MCF 10A (cell line): ENCODE measurements at regions of chr17 and their contacts with region 1.

Region 1: DNA sequence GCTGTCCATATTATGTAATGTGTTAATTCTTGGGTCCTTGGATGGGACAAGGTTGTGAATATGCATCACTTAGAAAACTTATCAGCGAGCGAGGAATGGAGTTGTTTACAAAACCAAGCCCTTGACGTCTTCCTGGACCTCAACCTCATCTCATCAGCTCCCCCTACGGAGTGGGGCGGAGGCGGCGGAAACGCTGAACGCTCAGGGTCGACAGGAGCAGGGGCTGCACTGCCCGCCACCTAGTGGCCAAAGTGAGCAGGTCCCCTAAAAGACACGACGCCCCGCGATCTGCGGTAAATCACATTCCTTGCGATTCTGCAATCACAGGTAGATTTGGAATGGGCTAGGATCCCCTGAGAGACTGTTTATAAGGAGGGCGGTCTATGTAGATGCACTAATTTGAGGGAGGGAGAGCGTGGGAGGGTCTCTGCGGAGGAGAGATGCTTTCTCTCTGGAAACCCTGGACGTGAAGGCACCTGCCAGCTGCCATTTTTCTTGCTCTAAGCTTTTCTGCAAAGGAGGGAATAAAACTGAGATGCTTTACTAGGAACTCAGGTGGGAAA is 5.4 kb upstream of the ICAM2 start:
- DNase-seq: peak; percentile 69
- H3K4me3 Mint-ChIP-seq: peak overlapping the region; percentile 21
- H3K27ac Mint-ChIP-seq: no peak overlapping the region
- H3K4me1 Mint-ChIP-seq: peaks cover 7% of the 10 kb centered on the region
- H3K27me3 Mint-ChIP-seq: no peaks in the 10 kb centered on the region
- CTCF ChIP-seq: peak; percentile 84

Region 2: DNA sequence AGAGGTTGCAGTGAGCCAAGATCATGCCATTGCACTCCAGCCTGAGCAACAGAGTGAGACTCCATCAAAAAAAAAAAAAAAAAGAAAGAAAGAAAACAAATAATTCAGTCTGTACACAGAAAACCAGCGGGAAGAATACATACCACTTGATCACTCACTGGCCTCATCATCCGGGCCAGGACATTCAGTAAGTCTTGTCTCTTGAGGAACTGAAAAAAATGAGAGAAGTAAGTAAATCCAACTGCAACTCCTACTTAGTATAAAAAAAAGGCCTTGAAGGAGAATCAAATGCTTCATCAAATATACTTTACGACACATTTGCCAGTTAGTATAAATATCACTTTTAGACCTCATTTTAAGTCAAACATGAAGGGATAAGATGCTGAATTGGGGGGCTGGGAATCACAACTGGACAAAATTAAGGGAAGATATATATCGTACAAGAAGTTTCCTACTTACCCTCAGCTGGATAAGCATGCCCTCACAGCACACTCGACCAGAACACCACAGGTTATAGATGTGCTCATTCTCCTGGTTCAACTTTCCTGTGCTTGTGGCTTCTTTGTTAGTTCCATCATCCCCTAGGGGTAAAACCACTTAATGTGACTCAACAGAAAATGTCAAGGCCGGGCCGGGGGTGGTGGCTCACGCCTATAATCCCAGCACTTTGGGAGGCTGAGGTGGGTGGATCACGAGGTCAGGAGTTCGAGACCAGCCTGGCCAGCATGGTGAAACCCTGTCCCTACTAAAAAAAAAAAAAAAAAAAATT is 264.9 kb before region 1 on chr17:
- CTCF ChIA-PET with region 1: no interaction called
- POLR2A ChIA-PET with region 1: no interaction called
- intact Hi-C with region 1: no loop called
- DNase-seq: no peak
- H3K4me3 Mint-ChIP-seq: no peak overlapping the region
- H3K27ac Mint-ChIP-seq: no peak overlapping the region
- H3K4me1 Mint-ChIP-seq: peaks cover 4% of the 10 kb centered on the region
- H3K27me3 Mint-ChIP-seq: no peaks in the 10 kb centered on the region
- CTCF ChIP-seq: no peak

Region 3: DNA sequence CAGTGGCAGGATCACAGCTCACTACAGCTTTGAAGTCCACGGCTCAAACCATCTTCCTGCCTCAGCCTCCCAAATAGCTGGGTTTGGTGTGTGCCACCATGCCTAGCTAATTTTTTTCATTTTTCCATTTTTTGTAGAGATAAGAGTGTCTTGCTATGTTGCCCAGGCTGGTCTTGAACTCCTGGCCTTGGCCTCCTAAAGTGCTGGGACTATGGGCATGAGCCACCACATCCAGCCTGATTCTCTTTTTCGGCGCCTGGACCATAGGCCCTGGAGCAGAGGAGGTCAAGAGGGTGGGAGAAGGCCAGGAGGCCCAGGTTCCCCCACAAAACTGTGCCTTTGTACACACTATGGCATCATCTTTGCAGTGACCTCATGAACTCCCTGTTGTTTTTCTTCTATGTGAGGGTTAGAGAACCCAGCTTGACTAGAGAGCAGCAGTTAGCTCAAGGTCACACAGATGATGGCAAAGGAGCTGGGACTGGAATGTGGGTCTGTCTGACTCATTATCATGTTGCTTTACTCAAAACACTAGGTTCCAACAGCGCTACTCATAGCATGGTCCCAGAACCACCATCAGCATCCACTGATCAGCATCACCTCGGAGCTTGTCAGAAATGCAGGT is 69.4 kb before region 1 on chr17:
- CTCF ChIA-PET with region 1: no interaction called
- POLR2A ChIA-PET with region 1: no interaction called
- intact Hi-C with region 1: no loop called
- DNase-seq: no peak
- H3K4me3 Mint-ChIP-seq: no peak overlapping the region
- H3K27ac Mint-ChIP-seq: no peak overlapping the region
- H3K4me1 Mint-ChIP-seq: no peaks in the 10 kb centered on the region
- H3K27me3 Mint-ChIP-seq: no peaks in the 10 kb centered on the region
- CTCF ChIP-seq: no peak

Region 4: DNA sequence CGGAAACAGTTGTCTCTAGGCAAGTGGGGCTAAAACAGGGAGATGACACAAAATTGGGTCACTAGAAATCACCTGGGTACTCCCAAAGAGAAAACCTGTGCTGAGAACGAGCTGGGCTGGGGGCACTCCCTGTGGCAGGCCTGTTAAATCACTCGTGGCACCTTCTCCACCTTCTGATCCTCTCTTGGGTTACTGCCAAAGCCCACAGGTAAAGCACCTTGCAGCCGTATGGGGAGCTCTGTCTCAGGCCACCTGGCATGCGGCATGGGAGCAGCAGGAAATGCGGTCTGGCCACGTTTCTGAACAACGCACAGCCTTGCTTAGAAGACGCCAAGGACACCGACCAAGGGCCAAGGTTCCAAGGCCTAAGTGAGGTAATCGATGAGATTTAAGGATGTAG is 16.1 kb after region 1 on chr17:
- CTCF ChIA-PET with region 1: interaction called, 18 read pairs
- POLR2A ChIA-PET with region 1: interaction called, 3 read pairs
- intact Hi-C with region 1: no loop called
- DNase-seq: no peak
- H3K4me3 Mint-ChIP-seq: no peak overlapping the region
- H3K27ac Mint-ChIP-seq: no peak overlapping the region
- H3K4me1 Mint-ChIP-seq: no peaks in the 10 kb centered on the region
- H3K27me3 Mint-ChIP-seq: no peaks in the 10 kb centered on the region
- CTCF ChIP-seq: no peak

Region 5: DNA sequence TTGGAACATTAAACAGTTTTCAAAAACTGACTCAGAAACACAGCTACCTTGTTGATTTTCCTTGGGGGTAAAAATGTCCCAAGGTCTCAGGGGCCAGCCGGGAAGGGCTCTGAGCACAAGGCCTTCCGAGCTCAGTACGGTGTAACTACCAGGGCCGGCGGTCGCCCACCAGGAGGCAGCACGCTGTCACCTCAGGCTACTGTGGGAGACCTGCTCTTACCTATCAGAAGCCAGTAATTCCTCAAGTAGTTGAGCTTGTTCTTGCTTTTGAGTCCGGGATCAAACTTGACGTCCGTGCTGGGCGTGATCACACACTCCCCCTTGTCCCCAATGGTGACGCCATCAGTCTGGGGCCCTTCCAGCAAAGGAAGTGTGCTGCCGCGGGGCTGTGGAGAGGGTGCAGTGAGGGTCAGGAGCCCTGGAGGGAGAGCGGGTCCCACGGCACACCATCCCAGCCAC is 38.0 kb after region 1 on chr17:
- CTCF ChIA-PET with region 1: interaction called, 12 read pairs
- POLR2A ChIA-PET with region 1: interaction called, 3 read pairs
- intact Hi-C with region 1: no loop called
- DNase-seq: peak; percentile 46
- H3K4me3 Mint-ChIP-seq: no peak overlapping the region
- H3K27ac Mint-ChIP-seq: no peak overlapping the region
- H3K4me1 Mint-ChIP-seq: no peaks in the 10 kb centered on the region
- H3K27me3 Mint-ChIP-seq: no peaks in the 10 kb centered on the region
- CTCF ChIP-seq: peak; percentile 19

Region 6: GRCh38 chr17:64117981-64118979 is 92.5 kb after region 1 on chr17:
- CTCF ChIA-PET with region 1: interaction called, 18 read pairs
- POLR2A ChIA-PET with region 1: interaction called, 8 read pairs
- intact Hi-C with region 1: no loop called
- DNase-seq: peak; percentile 76
- H3K4me3 Mint-ChIP-seq: no peak overlapping the region
- H3K27ac Mint-ChIP-seq: no peak overlapping the region
- H3K4me1 Mint-ChIP-seq: peaks cover 44% of the 10 kb centered on the region
- H3K27me3 Mint-ChIP-seq: no peaks in the 10 kb centered on the region
- CTCF ChIP-seq: no peak

Region 7: GRCh38 chr17:64174686-64175456 is 149.1 kb after region 1 on chr17:
- CTCF ChIA-PET with region 1: no interaction called
- POLR2A ChIA-PET with region 1: no interaction called
- intact Hi-C with region 1: no loop called
- DNase-seq: peak; percentile 22
- H3K4me3 Mint-ChIP-seq: no peak overlapping the region
- H3K27ac Mint-ChIP-seq: peak overlapping the region; percentile 75
- H3K4me1 Mint-ChIP-seq: peaks cover 25% of the 10 kb centered on the region
- H3K27me3 Mint-ChIP-seq: no peaks in the 10 kb centered on the region
- CTCF ChIP-seq: no peak